Upper lobe of right lung (tissue), 1 donor: ENCODE measurements at regions of chr5 and their contacts with region 1.

Region 1: DNA sequence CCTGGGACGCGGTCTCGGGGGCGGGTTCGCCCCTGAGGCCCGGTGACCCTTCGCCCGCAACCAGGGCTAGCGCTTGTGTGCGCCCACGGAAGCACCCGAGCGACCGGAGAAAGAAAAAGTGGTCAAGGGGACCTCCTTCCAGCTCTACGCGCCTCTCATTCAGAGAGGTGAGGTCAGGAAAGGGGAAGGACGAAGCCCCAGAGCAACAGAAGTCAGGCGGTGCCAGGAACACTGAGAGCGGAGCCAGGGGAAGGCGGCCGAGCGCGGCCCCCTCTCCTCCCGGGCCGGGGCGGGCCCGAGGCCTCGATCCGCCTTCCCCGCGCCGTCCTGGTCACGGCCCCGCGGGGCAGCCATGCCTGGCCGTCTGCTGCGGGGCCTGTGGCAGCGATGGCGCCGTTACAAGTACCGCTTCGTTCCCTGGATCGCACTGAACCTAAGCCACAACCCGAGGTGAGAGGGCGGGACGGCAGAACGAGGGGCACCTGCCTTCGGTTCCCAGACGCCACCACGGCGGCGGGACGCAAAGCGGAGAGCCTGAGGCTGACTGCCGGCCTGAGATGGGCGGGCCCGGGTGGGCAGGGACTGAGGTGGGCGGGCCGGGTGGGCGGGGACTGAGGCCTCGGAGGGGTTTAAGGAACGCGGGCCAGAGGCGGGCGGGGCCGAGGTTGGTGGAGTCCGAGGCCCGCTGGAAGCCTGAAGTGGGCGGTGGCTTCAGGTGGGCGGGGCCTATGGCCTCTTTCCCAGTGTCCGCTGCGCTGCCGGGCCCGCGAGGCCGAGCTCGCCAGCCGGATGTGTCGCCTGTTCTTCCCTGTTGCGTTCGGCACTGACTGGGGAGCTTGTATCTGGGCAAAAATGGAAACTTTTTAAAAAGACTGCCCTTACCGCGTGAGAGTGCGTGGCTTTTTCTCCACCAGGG is at the start of gene SETD9:
- DNase-seq: peak; percentile 100
- ATAC-seq: peak; percentile 96
- H3K4me3 ChIP-seq: peak within 1 kb of the TSS; percentile 61
- H3K27ac ChIP-seq: peak within 1 kb of the TSS; percentile 88
- H3K4me1 ChIP-seq: peaks cover 11% of the 10 kb centered on the region
- H3K27me3 ChIP-seq: no peaks in the 10 kb centered on the region
- CTCF ChIP-seq: no peak
- total RNA-seq, gene SETD9: 10.1 TPM

Region 2: DNA sequence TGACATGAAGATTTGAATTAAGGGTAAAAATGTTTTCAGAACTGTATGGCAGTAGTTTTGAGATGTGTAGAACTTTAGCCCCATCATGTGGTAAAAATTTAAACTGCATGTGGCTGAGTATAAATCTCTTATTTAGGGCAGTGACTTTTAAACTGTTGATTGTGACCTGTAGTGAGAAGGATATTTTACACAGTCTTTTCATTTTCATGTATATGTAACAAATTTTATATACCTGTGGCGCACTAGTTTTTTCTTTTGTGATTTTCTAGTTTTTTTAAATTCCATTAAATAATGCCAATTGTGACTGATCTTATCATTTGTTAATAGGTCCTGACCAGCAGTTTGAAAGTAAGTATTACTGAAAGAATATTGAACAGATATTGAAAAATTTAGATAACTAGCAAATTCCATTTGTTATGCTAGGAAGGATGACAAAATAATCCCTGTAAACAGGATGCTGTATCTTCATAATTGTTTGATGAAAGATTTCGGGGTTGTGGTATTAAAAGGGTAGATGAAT is 311.6 kb after region 1 on chr5:
- intact Hi-C with region 1: loop called (anchors 10 kb)
- DNase-seq: no peak
- ATAC-seq: peak; percentile 77
- H3K4me3 ChIP-seq: no peak overlapping the region
- H3K27ac ChIP-seq: no peak overlapping the region
- H3K4me1 ChIP-seq: peaks cover 8% of the 10 kb centered on the region
- H3K27me3 ChIP-seq: no peaks in the 10 kb centered on the region
- CTCF ChIP-seq: peak; percentile 93